PC-3 (cell line): ENCODE measurements at regions of chr13 and their contacts with region 1.

Region 1: GRCh38 chr13:57918086-57918485 is 286.5 kb downstream of the PCDH17 start:
- DNase-seq: no peak
- ATAC-seq: no peak
- H3K4me3 ChIP-seq: no peak overlapping the region
- H3K27ac ChIP-seq: no peak overlapping the region
- H3K4me1 ChIP-seq: no peaks in the 10 kb centered on the region
- H3K27me3 ChIP-seq: no peaks in the 10 kb centered on the region
- CTCF ChIP-seq: no peak

Region 2: DNA sequence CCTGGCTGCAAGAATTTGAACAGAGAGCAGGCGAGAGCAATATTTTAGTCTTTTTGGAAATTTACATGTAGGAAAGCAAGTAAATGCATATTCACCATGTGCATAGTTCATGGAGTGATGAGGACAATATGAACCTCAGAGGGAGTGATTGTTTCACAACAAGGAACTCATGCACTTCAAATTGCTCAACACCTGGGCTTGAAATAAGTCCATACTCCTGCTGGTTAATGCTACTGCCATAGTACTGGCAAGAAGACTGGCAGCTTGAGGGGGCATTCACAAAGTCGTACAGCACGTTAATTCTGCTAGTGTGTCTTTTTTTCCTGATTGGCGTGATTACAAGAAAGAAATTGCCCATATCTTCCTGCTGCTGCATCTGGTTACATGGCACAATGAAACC is 19.0 kb before region 1 on chr13:
- CTCF ChIA-PET with region 1: interaction called, 11 read pairs
- POLR2A ChIA-PET with region 1: no interaction called
- intact Hi-C with region 1: no loop called
- DNase-seq: no peak
- ATAC-seq: no peak
- H3K4me3 ChIP-seq: no peak overlapping the region
- H3K27ac ChIP-seq: no peak overlapping the region
- H3K4me1 ChIP-seq: no peaks in the 10 kb centered on the region
- H3K27me3 ChIP-seq: no peaks in the 10 kb centered on the region
- CTCF ChIP-seq: no peak